ENCODE measurements at regions of chr7 and their contacts with region 1.

Region 1: DNA sequence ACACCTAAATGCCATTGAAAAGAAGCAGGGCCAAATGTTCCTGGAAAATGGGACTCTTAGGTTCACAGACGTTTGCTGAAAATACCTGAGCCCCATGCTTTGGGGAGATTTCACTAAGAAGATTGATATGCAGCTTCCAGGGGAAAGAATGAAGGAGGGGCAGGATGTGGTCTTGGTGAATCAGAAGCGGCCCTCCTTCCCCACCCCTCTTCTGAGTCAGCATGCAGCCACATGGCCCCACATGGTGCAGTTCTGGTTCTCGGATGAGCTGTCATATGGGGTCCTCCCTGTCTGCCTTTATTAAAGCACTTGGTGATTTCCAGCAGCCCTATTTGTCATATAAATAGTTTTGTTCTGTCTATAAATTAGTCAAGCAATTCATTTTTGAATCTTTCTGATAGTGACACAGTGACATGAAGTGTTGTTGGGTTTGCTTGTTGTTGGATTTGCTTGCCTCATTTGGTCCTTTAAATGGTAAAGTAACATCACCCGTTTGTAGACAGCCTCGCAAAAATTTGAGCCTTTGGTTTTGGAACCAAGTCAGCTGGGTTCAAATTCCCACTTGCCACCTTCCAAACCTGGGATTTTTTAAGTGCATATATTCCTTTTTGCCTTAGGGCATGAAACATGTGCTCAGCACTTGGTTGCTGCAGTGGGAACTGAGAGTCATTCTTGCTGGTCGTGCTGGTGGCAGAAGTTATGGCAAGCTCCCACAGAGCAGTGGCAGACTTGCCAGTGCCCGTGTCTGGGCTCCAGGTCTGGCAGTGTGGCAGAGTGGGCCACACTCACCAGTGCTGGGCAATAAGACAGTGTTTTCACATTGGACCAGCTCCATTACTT is 68.1 kb upstream of the CDK6 start:
- DNase-seq: peak; percentile 94
- ATAC-seq: peak; percentile 98
- H3K4me3 ChIP-seq: no peak overlapping the region
- H3K27ac ChIP-seq: peak overlapping the region; percentile 92
- H3K4me1 ChIP-seq: peaks cover 25% of the 10 kb centered on the region
- H3K27me3 ChIP-seq: no peaks in the 10 kb centered on the region
- CTCF ChIP-seq: no peak

Region 2: GRCh38 chr7:92633211-92633906 is 271.2 kb before region 1 on chr7:
- CTCF ChIA-PET with region 1: no interaction called
- POLR2A ChIA-PET with region 1: no interaction called
- intact Hi-C with region 1: loop called (anchors 5 kb)
- DNase-seq: peak; percentile 91
- ATAC-seq: peak; percentile 80
- H3K4me3 ChIP-seq: peak overlapping the region; percentile 38; the same call in 1 of the 2 replicates
- H3K27ac ChIP-seq: peak overlapping the region; percentile 73
- H3K4me1 ChIP-seq: peaks cover 51% of the 10 kb centered on the region
- H3K27me3 ChIP-seq: no peaks in the 10 kb centered on the region
- CTCF ChIP-seq: no peak

Region 3: GRCh38 chr7:92691578-92691977 is 212.9 kb before region 1 on chr7:
- CTCF ChIA-PET with region 1: no interaction called
- POLR2A ChIA-PET with region 1: no interaction called
- intact Hi-C with region 1: loop called (anchors 5 kb)
- DNase-seq: peak; percentile 81
- ATAC-seq: peak; percentile 77
- H3K4me3 ChIP-seq: no peak overlapping the region
- H3K27ac ChIP-seq: no peak overlapping the region
- H3K4me1 ChIP-seq: peaks cover 14% of the 10 kb centered on the region
- H3K27me3 ChIP-seq: no peaks in the 10 kb centered on the region
- CTCF ChIP-seq: peak; percentile 81

Region 4: DNA sequence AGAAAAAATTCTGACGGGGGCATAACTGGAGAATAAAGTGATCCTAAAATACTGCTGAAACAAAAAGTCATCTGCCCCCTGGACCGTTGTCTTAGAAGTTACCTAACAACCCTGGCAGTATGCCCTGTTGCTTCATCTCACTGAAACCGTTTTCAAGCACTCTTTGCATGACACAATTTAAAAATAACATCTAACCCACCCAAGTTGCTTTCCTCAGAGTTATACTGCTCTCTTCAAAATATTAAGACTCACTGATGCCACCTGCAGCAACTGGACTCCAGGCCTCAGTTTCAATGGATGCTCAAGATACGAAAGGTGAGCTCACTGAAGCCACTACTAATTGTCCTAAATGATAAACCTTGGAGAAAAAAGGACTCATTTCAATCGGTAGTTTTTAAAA is 125.5 kb before region 1 on chr7:
- CTCF ChIA-PET with region 1: no interaction called
- POLR2A ChIA-PET with region 1: no interaction called
- intact Hi-C with region 1: no loop called
- DNase-seq: no peak
- ATAC-seq: no peak
- H3K4me3 ChIP-seq: no peak overlapping the region
- H3K27ac ChIP-seq: no peak overlapping the region
- H3K4me1 ChIP-seq: peaks cover 23% of the 10 kb centered on the region
- H3K27me3 ChIP-seq: no peaks in the 10 kb centered on the region
- CTCF ChIP-seq: no peak

Region 5: GRCh38 chr7:92988051-92988450 is 83.5 kb after region 1 on chr7:
- CTCF ChIA-PET with region 1: no interaction called
- POLR2A ChIA-PET with region 1: no interaction called
- intact Hi-C with region 1: loop called (anchors 5 kb)
- DNase-seq: peak; percentile 51
- ATAC-seq: peak; percentile 49
- H3K4me3 ChIP-seq: no peak overlapping the region
- H3K27ac ChIP-seq: no peak overlapping the region
- H3K4me1 ChIP-seq: no peaks in the 10 kb centered on the region
- H3K27me3 ChIP-seq: no peaks in the 10 kb centered on the region
- CTCF ChIP-seq: peak; percentile 75

Region 6: GRCh38 chr7:93015779-93016481 is 111.4 kb after region 1 on chr7:
- CTCF ChIA-PET with region 1: no interaction called
- POLR2A ChIA-PET with region 1: interaction called, 10 read pairs
- intact Hi-C with region 1: no loop called
- DNase-seq: no peak
- ATAC-seq: no peak
- H3K4me3 ChIP-seq: no peak overlapping the region
- H3K27ac ChIP-seq: peak overlapping the region; percentile 37
- H3K4me1 ChIP-seq: peaks cover 38% of the 10 kb centered on the region
- H3K27me3 ChIP-seq: no peaks in the 10 kb centered on the region
- CTCF ChIP-seq: no peak

Region 7: GRCh38 chr7:93046641-93047040 is 142.1 kb after region 1 on chr7:
- CTCF ChIA-PET with region 1: no interaction called
- POLR2A ChIA-PET with region 1: no interaction called
- intact Hi-C with region 1: loop called (anchors 5 kb)
- DNase-seq: peak; percentile 56
- ATAC-seq: peak; percentile 76
- H3K4me3 ChIP-seq: no peak overlapping the region
- H3K27ac ChIP-seq: peak overlapping the region; percentile 46
- H3K4me1 ChIP-seq: peaks cover 20% of the 10 kb centered on the region
- H3K27me3 ChIP-seq: no peaks in the 10 kb centered on the region
- CTCF ChIP-seq: no peak

Measured in PC-3 (cell line).